GM10248 (cell line): ENCODE measurements at regions of chr7 and their contacts with region 1.

Region 1: GRCh38 chr7:12389089-12389700 is 14.5 kb downstream of the VWDE start:
- DNase-seq: peak; percentile 37
- CTCF ChIP-seq: peak; percentile 73

Region 2: DNA sequence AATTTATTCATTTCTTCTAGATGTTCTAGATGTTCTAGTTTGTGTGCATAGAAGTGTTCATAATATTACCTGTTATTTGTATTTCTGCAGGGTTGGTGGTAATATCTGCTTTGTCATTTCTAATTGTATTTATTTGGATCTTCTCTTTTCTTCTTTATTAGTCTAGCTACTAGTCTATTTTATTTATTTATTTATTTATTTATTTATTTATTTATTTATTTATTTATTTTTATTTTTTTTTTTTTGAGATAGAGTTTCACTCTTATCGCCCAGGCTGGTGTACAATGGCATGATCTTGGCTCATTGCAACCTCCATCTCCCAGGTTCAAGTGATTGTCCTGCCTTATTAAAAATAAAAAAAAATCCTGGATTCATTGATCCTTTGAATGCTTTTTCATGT is 442.4 kb before region 1 on chr7:
- CTCF ChIA-PET with region 1: no interaction called
- POLR2A ChIA-PET with region 1: no interaction called
- DNase-seq: no peak
- CTCF ChIP-seq: no peak

Region 3: GRCh38 chr7:12357508-12357907 is 31.7 kb before region 1 on chr7:
- CTCF ChIA-PET with region 1: no interaction called
- POLR2A ChIA-PET with region 1: no interaction called
- DNase-seq: no peak
- CTCF ChIP-seq: no peak

Region 4: DNA sequence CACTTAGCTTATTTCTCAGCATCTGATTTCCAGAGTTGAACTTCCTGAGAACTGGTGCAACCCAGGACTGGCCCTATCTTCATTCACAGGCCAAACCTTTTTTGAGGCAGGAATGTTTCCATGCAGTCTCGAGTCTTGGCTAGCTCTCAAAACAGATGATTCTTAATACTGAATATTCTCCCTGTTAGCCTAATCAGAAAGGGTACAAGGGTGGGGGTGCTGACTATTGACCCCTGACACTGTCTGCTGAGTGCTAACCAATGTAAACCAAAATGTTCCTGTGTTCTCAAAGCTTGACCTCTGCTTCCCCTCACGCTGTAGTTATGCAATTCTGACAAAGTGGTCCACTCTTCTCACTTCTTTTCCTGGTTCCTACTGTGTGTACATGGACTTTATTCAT is 10.8 kb before region 1 on chr7:
- CTCF ChIA-PET with region 1: interaction called, 13 read pairs
- POLR2A ChIA-PET with region 1: no interaction called
- DNase-seq: no peak
- CTCF ChIP-seq: no peak